ENCODE measurements at regions of chr10 and their contacts with region 1.

Region 1: GRCh38 chr10:117320050-117320665 is 55.1 kb downstream of the PDZD8 start:
- DNase-seq: peak; percentile 8
- H3K4me3 Mint-ChIP-seq: no peak overlapping the region
- H3K27ac Mint-ChIP-seq: no peak overlapping the region
- H3K4me1 Mint-ChIP-seq: no peaks in the 10 kb centered on the region
- H3K27me3 Mint-ChIP-seq: no peaks in the 10 kb centered on the region

Region 2: GRCh38 chr10:117226824-117227451 is 93.2 kb before region 1 on chr10:
- CTCF ChIA-PET with region 1: interaction called, 12 read pairs
- intact Hi-C with region 1: no loop called
- DNase-seq: peak; percentile 28
- H3K4me3 Mint-ChIP-seq: no peak overlapping the region
- H3K27ac Mint-ChIP-seq: no peak overlapping the region
- H3K4me1 Mint-ChIP-seq: no peaks in the 10 kb centered on the region
- H3K27me3 Mint-ChIP-seq: peaks cover 35% of the 10 kb centered on the region

Region 3: GRCh38 chr10:117350909-117351308 is 30.8 kb after region 1 on chr10:
- CTCF ChIA-PET with region 1: no interaction called
- intact Hi-C with region 1: no loop called
- DNase-seq: no peak
- H3K4me3 Mint-ChIP-seq: no peak overlapping the region
- H3K27ac Mint-ChIP-seq: no peak overlapping the region
- H3K4me1 Mint-ChIP-seq: peaks cover 43% of the 10 kb centered on the region
- H3K27me3 Mint-ChIP-seq: no peaks in the 10 kb centered on the region

Region 4: GRCh38 chr10:118439824-118440223 is 1119.7 kb after region 1 on chr10:
- CTCF ChIA-PET with region 1: no interaction called
- intact Hi-C with region 1: no loop called
- DNase-seq: no peak
- H3K4me3 Mint-ChIP-seq: no peak overlapping the region
- H3K27ac Mint-ChIP-seq: no peak overlapping the region
- H3K4me1 Mint-ChIP-seq: no peaks in the 10 kb centered on the region
- H3K27me3 Mint-ChIP-seq: peaks cover 35% of the 10 kb centered on the region